ENCODE measurements at regions of chr17 and their contacts with region 1.

Region 1: DNA sequence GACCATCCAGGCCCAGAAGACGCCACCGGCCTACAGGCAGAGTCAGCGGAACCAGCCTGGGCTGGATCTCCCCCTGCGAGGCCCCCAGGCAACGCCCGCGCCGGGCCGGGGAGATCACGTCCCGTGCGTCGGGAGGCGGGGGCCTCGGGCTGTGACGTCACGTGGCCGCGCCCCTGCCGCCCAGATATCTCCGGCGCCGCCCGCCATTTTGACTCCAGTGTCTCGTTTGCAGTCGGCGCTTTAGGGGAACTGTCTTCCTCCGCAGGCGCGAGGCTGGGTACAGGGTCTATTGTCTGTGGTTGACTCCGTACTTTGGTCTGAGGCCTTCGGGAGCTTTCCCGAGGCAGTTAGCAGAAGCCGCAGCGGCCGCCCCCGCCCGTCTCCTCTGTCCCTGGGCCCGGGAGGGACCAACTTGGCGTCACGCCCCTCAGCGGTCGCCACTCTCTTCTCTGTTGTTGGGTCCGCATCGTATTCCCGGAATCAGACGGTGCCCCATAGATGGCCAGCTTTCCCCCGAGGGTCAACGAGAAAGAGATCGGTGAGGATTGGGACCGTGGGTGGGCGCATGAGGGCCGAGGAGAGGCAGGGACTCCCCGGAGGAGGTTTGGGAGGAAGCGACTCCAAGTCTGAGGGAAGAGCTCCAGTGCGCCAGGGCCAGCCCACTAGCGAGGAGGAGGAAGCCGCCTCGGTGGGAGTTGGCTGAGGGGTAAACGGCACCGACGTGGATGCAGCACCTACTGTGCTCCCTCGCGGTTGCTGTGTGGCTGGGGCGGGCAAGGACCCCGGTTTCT is at the start of gene WSB1:
- H3K4me3 Mint-ChIP-seq: peak within 1 kb of the TSS; percentile 95
- H3K27ac Mint-ChIP-seq: peak within 1 kb of the TSS; percentile 100
- H3K4me1 Mint-ChIP-seq: peaks cover 36% of the 10 kb centered on the region
- H3K27me3 Mint-ChIP-seq: no peaks in the 10 kb centered on the region

Region 2: GRCh38 chr17:27181935-27182334 is 112.2 kb before region 1 on chr17:
- intact Hi-C with region 1: no loop called
- H3K4me3 Mint-ChIP-seq: no peak overlapping the region
- H3K27ac Mint-ChIP-seq: no peak overlapping the region
- H3K4me1 Mint-ChIP-seq: peaks cover 5% of the 10 kb centered on the region
- H3K27me3 Mint-ChIP-seq: no peaks in the 10 kb centered on the region

Region 3: DNA sequence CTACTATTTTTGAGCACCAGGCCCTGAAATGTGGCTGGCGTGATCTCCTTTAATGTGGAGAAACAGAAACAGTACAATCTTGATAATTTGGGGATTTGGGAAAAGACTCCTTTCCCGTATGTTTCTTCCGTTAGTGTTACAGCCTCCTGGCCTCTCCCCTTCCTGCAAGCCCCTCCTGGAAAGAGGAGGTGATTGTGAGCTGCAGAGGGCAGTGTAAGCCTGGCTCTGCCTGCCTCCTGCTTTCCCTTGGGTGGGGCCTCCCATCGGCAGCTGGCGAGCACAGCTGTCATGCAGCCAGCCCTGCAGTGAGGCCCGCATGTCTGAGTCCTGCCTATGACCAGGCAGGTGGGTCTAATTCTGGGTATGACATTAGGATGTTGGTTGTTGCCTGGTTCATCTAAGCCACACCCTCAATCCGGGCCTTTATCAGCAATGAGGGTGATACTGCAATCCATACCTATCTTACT is 48.8 kb before region 1 on chr17:
- intact Hi-C with region 1: loop called (anchors 2 kb)
- H3K4me3 Mint-ChIP-seq: peak overlapping the region; percentile 70
- H3K27ac Mint-ChIP-seq: peak overlapping the region; percentile 96
- H3K4me1 Mint-ChIP-seq: peaks cover 65% of the 10 kb centered on the region
- H3K27me3 Mint-ChIP-seq: no peaks in the 10 kb centered on the region

Region 4: DNA sequence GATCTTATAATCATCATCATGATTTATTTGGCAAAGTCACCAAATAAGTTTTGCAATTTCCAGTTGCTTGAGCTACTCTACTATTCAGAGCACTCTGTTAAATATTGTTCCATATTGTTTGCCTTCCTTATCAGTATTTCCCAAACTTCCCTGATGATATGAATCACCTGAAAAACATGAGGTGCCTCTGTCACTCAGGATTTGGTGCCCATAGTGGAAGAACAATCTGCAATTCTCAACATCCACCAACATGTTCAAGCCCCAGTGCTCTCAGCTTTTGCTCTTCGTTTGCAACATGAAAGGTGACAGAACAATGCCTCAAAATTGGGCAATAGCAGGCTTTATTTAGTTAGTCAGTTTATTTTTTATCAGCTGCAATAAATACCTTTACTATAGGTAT is 28.8 kb before region 1 on chr17:
- intact Hi-C with region 1: loop called (anchors 2 kb)
- H3K4me3 Mint-ChIP-seq: no peak overlapping the region
- H3K27ac Mint-ChIP-seq: no peak overlapping the region
- H3K4me1 Mint-ChIP-seq: peaks cover 34% of the 10 kb centered on the region
- H3K27me3 Mint-ChIP-seq: peaks cover 2% of the 10 kb centered on the region

Region 5: DNA sequence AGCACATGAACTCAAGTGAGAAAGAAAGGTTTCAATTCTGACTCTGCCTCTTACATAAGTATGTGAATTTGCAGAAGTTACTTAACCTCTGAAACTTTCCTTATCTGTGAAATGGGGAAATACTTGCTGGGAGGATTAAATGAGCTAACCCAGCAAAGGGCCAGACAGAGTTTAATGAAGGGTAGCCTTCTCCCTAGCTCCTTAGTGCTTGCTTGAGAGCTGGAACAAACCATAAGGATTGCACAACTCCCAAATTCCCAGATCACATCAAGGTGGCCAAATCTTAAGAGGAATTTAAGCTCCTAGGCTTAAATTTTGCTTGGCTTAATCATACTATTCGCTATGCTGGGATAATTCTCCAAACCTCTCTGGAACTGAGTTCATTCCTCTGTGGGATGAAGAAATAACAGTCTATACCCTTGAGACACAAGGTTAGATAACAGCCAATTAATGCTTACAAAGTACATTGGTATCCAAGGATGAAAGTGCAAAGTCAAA is 12.0 kb before region 1 on chr17:
- intact Hi-C with region 1: loop called (anchors 1 kb)
- H3K4me3 Mint-ChIP-seq: peak overlapping the region; percentile 13
- H3K27ac Mint-ChIP-seq: peak overlapping the region; percentile 70
- H3K4me1 Mint-ChIP-seq: peaks cover 50% of the 10 kb centered on the region
- H3K27me3 Mint-ChIP-seq: no peaks in the 10 kb centered on the region

Region 6: GRCh38 chr17:27315322-27315721 is 21.2 kb after region 1 on chr17:
- intact Hi-C with region 1: no loop called
- H3K4me3 Mint-ChIP-seq: no peak overlapping the region
- H3K27ac Mint-ChIP-seq: no peak overlapping the region
- H3K4me1 Mint-ChIP-seq: peaks cover 15% of the 10 kb centered on the region
- H3K27me3 Mint-ChIP-seq: no peaks in the 10 kb centered on the region

Region 7: GRCh38 chr17:27332485-27333409 is 38.7 kb after region 1 on chr17:
- intact Hi-C with region 1: loop called (anchors 5 kb)
- H3K4me3 Mint-ChIP-seq: peak overlapping the region; percentile 73
- H3K27ac Mint-ChIP-seq: peak overlapping the region; percentile 92
- H3K4me1 Mint-ChIP-seq: peaks cover 61% of the 10 kb centered on the region
- H3K27me3 Mint-ChIP-seq: no peaks in the 10 kb centered on the region

Region 8: DNA sequence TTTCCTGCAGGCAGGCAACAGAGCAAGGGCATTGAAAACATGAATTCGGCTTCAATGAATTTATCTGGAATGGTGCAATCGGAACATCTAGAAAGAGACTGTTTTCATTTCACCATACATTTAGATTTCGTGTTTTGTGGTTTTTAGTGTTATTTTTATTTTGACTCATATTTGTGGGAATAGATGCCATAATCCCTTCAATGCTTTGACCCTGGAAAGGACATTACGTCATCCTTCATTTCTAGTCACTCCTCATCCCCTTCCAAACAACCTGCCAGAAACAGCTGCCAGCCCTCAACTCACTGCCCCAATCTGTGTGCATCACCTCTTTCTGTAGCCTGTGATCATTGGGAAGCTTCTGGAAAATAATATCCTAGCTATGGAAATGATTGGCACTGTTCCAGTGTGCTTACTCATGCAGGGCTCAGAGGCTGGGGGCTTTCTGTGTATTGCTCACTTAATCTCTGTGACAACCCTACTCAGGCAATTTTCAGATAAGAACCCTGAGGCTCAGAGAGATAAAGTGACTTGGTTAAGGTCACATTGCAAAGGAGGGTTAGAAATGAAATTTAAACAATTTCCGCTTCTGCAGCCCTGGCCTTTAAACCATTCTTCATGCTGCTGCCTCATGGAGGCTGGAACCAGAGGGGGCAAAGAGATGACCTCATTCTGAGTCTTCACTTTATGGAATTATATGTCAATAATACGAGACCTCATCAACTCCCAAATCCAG is 152.6 kb after region 1 on chr17:
- intact Hi-C with region 1: no loop called
- H3K4me3 Mint-ChIP-seq: no peak overlapping the region
- H3K27ac Mint-ChIP-seq: no peak overlapping the region
- H3K4me1 Mint-ChIP-seq: peaks cover 18% of the 10 kb centered on the region
- H3K27me3 Mint-ChIP-seq: peaks cover 8% of the 10 kb centered on the region